H1 (cell line): ENCODE measurements at regions of chr4 and their contacts with region 1.

Region 1: GRCh38 chr4:8547108-8547970 is 32.9 kb upstream of the GPR78 start:
- DNase-seq: peak; percentile 34 to 69
- H3K4me3 ChIP-seq: no peak overlapping the region
- H3K27ac ChIP-seq: no peak overlapping the region
- H3K4me1 ChIP-seq: peaks cover 0 to 15% (median 3%) of the 10 kb centered on the region in 4 experiments; a peak in 5 of 7 replicates
- H3K27me3 ChIP-seq: no peaks in the 10 kb centered on the region; a peak in 1 of 7 replicates
- CTCF ChIP-seq: peak in 2 of 3 experiments; percentile 82 to 84; a peak in 3 of 4 replicates
- EP300 ChIP-seq: peak in 1 of 2 experiments; percentile 25; a peak in 1 of 3 replicates
- POLR2A ChIP-seq: no peak
- RAD21 ChIP-seq: peak; percentile 91 to 95

Region 2: DNA sequence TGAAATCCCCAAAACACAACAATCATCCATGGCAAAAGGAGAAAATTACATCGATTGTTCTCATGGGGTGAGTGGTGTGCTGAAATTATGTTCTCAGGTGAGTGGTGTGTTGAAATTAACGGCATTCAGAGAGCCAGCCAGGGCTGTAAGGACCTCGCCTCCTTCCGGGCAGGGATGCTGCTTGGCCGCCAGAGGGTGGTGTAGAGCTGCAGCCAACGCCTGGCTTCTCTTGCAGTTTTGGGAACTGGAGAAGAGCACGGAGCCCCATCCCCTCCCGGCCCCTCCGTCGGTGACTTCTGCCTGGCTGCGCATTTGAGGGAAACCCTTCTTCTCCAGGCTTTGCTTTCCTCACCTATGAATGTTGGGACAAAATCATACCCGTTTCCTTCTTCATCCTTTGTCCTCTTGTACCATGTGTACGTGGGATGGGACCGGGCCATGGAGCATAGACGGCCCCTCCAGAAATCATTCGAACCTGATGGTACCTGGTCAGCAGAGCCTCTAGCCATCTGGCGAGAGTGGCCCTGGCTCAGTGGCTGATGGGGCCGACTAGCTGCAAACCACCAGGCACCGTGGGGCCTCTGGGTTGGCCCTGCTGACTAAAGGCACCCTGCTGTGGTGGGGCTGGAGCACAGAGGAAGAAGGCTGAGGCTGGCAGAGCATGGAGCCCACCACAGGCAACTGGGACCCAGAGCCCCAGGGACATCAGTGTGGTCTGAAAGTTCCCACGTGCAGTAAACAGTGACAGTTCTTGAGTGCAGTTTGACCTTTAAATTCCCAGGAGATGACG is 78.4 kb before region 1 on chr4:
- CTCF ChIA-PET with region 1: interaction called, 237 read pairs
- POLR2A ChIA-PET with region 1: interaction called, 4 read pairs
- DNase-seq: peak; percentile 57 to 92
- H3K4me3 ChIP-seq: no peak overlapping the region
- H3K27ac ChIP-seq: no peak overlapping the region
- H3K4me1 ChIP-seq: peaks cover 0 to 5% (median 2%) of the 10 kb centered on the region in 4 experiments; a peak in 2 of 7 replicates
- H3K27me3 ChIP-seq: no peaks in the 10 kb centered on the region
- CTCF ChIP-seq: peak in 2 of 3 experiments; percentile 97 to 99; a peak in 3 of 4 replicates
- EP300 ChIP-seq: no peak
- POLR2A ChIP-seq: no peak
- RAD21 ChIP-seq: peak; percentile 98 to 99

Region 3: DNA sequence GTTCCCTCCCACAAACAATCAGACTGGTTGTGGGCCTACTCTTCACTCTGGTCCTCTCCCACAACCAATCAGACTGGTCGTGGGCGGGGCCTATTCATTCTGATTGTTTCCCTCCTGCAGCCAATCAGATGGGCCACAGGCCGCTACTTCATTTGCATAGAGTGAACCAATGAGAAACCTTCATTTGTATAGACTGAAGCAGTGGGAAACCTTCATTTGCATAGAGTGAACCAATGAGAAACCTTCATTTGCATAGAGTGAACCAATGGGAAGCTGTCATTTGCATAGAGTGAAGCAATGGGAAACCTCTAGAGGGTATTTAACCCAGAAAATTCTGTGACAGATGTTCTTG is 51.5 kb before region 1 on chr4:
- CTCF ChIA-PET with region 1: interaction called, 22 read pairs
- POLR2A ChIA-PET with region 1: interaction called, 3 read pairs
- DNase-seq: no peak
- H3K4me3 ChIP-seq: no peak overlapping the region
- H3K27ac ChIP-seq: no peak overlapping the region
- H3K4me1 ChIP-seq: peaks cover 0 to 13% (median 3%) of the 10 kb centered on the region in 4 experiments; a peak in 5 of 7 replicates
- H3K27me3 ChIP-seq: no peaks in the 10 kb centered on the region
- CTCF ChIP-seq: no peak
- EP300 ChIP-seq: no peak
- POLR2A ChIP-seq: no peak
- RAD21 ChIP-seq: no peak

Region 4: GRCh38 chr4:8528713-8529112 is 18.6 kb before region 1 on chr4:
- CTCF ChIA-PET with region 1: interaction called, 23 read pairs
- POLR2A ChIA-PET with region 1: interaction called, 3 read pairs
- DNase-seq: no peak
- H3K4me3 ChIP-seq: no peak overlapping the region
- H3K27ac ChIP-seq: no peak overlapping the region
- H3K4me1 ChIP-seq: peaks cover under 1 to 11% (median 9%) of the 10 kb centered on the region in 4 experiments
- H3K27me3 ChIP-seq: peaks cover 0 to 2% (median 0%) of the 10 kb centered on the region in 4 experiments; a peak in 1 of 7 replicates
- CTCF ChIP-seq: no peak
- EP300 ChIP-seq: no peak
- POLR2A ChIP-seq: no peak
- RAD21 ChIP-seq: no peak

Region 5: GRCh38 chr4:8560267-8561047 is 13.1 kb after region 1 on chr4:
- CTCF ChIA-PET with region 1: interaction called, 14 read pairs
- POLR2A ChIA-PET with region 1: interaction called, 4 read pairs
- DNase-seq: no peak
- H3K4me3 ChIP-seq: no peak overlapping the region
- H3K27ac ChIP-seq: no peak overlapping the region
- H3K4me1 ChIP-seq: peaks cover 0 to 10% (median 4%) of the 10 kb centered on the region in 4 experiments; a peak in 3 of 7 replicates
- H3K27me3 ChIP-seq: no peaks in the 10 kb centered on the region
- CTCF ChIP-seq: no peak
- EP300 ChIP-seq: no peak
- POLR2A ChIP-seq: no peak
- RAD21 ChIP-seq: no peak

Region 6: GRCh38 chr4:8586671-8587455 is 39.5 kb after region 1 on chr4:
- CTCF ChIA-PET with region 1: interaction called, 49 read pairs
- POLR2A ChIA-PET with region 1: no interaction called
- DNase-seq: no peak
- H3K4me3 ChIP-seq: no peak overlapping the region
- H3K27ac ChIP-seq: no peak overlapping the region
- H3K4me1 ChIP-seq: peaks cover 0 to 13% (median 9%) of the 10 kb centered on the region in 4 experiments; a peak in 5 of 7 replicates
- H3K27me3 ChIP-seq: peaks cover 0 to 8% (median 5%) of the 10 kb centered on the region in 4 experiments; a peak in 5 of 7 replicates
- CTCF ChIP-seq: peak in 2 of 3 experiments; percentile 5; a peak in 1 of 4 replicates
- EP300 ChIP-seq: no peak
- POLR2A ChIP-seq: no peak
- RAD21 ChIP-seq: peak in 1 of 2 experiments; percentile 26; a peak in 2 of 4 replicates

Region 7: DNA sequence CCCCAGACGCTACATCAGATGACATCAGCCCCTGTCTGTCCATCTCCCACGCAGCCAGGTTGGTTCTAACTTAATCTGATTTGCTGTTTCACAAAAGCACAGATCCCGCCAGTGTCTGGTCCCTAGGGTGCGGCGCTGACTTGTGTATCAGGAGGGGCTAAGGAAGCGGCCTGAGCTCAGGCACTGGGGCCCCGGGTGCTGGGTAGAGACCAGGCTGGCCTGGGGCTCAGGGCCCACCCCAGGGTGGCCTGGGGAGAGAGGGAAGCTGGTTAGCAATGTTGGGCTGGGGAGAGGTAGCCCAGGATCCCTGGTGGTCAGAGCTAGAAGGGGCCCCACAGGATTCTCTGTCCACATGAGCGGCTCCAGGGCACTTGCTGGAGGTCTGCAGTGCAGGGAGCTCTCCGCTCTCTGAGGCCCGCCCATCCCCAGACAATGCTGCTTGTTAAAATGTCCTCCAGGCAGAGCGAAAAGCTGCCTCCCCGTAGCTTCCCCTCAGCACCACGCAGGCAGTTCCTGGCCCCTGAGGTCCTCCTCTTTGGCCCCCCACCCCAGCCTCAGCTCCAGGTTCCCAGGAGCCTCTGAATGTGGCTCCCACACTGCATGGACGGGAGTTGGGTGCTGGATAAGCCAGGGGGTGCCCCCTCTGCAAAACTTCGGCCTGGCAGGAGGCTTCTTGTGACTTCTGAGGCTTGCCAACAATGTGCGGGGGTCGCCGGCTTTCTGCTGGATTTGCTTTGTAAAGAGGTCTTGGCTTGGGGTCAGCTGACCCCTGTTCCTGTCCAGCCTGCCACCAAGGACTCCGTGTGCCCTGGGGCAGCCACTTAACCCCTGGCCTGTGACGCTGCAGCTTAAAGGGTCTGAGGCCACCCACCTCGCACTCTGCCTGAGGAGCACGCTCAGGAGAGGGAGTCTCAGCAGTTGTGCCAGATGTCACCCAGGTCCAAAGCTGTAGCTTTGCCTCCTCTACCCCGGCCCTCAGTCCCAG is 158.1 kb after region 1 on chr4:
- CTCF ChIA-PET with region 1: no interaction called
- POLR2A ChIA-PET with region 1: no interaction called
- DNase-seq: peak in 1 of 2 experiments; percentile 47
- H3K4me3 ChIP-seq: no peak overlapping the region
- H3K27ac ChIP-seq: no peak overlapping the region
- H3K4me1 ChIP-seq: peaks cover 0 to 9% (median 2%) of the 10 kb centered on the region in 4 experiments; a peak in 5 of 7 replicates
- H3K27me3 ChIP-seq: no peaks in the 10 kb centered on the region
- CTCF ChIP-seq: no peak
- EP300 ChIP-seq: no peak
- POLR2A ChIP-seq: no peak
- RAD21 ChIP-seq: no peak